ENCODE measurements at regions of chr20 and their contacts with region 1.

Region 1: GRCh38 chr20:35771689-35772562 is at the start of gene PHF20:
- DNase-seq: peak; percentile 87
- ATAC-seq: peak; percentile 88
- H3K4me3 ChIP-seq: peak within 1 kb of the TSS; percentile 92
- H3K27ac ChIP-seq: peak within 1 kb of the TSS; percentile 79
- H3K4me1 ChIP-seq: peaks cover 33% of the 10 kb centered on the region
- H3K27me3 ChIP-seq: no peaks in the 10 kb centered on the region
- CTCF ChIP-seq: no peak
- EP300 ChIP-seq: peak; percentile 16 to 24; a peak in 1 of 4 replicates
- POLR2A ChIP-seq: peak; percentile 90
- RAD21 ChIP-seq: no peak
- polyA plus RNA-seq, gene PHF20: 90.7 to 91.2 TPM

Region 2: DNA sequence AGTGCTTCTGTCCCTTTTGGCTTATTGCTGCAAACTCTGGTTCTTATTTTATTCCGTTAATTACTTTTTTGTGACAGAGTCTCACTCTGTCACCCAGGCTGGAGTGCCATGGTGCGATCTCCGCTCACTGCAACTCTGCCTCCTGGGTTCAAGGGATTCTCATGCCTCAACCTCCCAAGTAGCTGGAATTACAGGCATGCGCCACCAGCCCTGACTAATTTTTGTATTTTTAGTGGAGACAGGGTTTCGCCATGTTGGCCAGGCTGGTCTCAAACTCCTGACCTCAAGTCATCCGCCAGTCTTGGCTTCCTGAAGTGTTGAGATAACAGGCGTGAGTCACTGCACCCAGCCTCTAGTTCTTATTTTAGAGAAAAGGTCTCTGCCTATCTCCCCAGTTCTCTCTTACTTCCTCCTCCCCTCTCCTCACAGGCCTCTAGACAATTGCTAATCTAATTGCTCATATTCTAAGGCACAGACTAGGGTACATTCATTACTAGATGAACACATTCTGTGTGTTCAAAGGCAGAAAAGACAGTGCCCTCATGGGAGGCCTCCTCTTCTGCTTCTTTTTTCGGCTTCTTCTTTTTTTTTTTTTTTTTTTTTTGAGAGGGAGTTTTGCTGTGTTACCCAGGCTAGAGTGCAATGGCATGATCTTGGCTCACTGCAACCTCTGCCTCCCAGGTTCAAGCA is 651.8 kb before region 1 on chr20:
- CTCF ChIA-PET with region 1: no interaction called
- POLR2A ChIA-PET with region 1: no interaction called
- RAD21 ChIA-PET with region 1: no interaction called
- SMC1A ChIA-PET with region 1: no interaction called
- in situ Hi-C with region 1: no loop called
- intact Hi-C with region 1: no loop called
- DNase-seq: no peak
- ATAC-seq: no peak
- H3K4me3 ChIP-seq: no peak overlapping the region
- H3K27ac ChIP-seq: no peak overlapping the region
- H3K4me1 ChIP-seq: no peaks in the 10 kb centered on the region
- H3K27me3 ChIP-seq: no peaks in the 10 kb centered on the region
- CTCF ChIP-seq: no peak
- EP300 ChIP-seq: no peak
- POLR2A ChIP-seq: no peak
- RAD21 ChIP-seq: no peak

Region 3: GRCh38 chr20:35511814-35512420 is 260.0 kb before region 1 on chr20:
- CTCF ChIA-PET with region 1: no interaction called
- POLR2A ChIA-PET with region 1: no interaction called
- RAD21 ChIA-PET with region 1: no interaction called
- SMC1A ChIA-PET with region 1: no interaction called
- in situ Hi-C with region 1: no loop called
- intact Hi-C with region 1: no loop called
- DNase-seq: no peak
- ATAC-seq: no peak
- H3K4me3 ChIP-seq: no peak overlapping the region
- H3K27ac ChIP-seq: no peak overlapping the region
- H3K4me1 ChIP-seq: no peaks in the 10 kb centered on the region
- H3K27me3 ChIP-seq: no peaks in the 10 kb centered on the region
- CTCF ChIP-seq: peak; percentile 40 to 58 (median 49)
- EP300 ChIP-seq: no peak
- POLR2A ChIP-seq: no peak
- RAD21 ChIP-seq: peak; percentile 63

Region 4: DNA sequence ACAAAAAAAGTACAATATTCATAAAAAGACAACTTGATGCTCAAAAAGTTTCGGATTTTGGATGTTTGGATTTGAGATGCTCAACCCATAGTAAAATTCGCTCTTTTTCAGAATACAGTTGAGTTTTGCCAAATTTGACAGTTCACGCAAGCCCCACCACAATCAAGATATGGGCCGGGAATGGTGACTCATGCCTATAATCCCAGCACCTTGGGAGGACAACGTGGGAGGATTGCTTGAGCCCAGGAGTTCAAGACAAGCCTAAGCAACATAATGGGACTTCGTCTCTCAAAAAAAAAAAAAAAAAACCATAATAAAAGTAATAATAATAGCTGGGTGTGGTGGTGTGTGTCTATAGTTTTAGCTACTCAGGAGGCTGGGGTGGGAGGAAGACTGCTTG is 51.2 kb after region 1 on chr20:
- CTCF ChIA-PET with region 1: no interaction called
- POLR2A ChIA-PET with region 1: interaction called, 10 read pairs
- RAD21 ChIA-PET with region 1: no interaction called
- SMC1A ChIA-PET with region 1: interaction called, 4 read pairs
- in situ Hi-C with region 1: no loop called
- intact Hi-C with region 1: no loop called
- DNase-seq: no peak
- ATAC-seq: no peak
- H3K4me3 ChIP-seq: no peak overlapping the region
- H3K27ac ChIP-seq: no peak overlapping the region
- H3K4me1 ChIP-seq: peaks cover 14% of the 10 kb centered on the region; the same call in 1 of the 2 replicates
- H3K27me3 ChIP-seq: no peaks in the 10 kb centered on the region
- CTCF ChIP-seq: no peak
- EP300 ChIP-seq: no peak
- POLR2A ChIP-seq: no peak
- RAD21 ChIP-seq: no peak

Measured in GM12878 (cell line).